Caco-2 (cell line): ENCODE measurements at regions of chr3 and their contacts with region 1.

Region 1: GRCh38 chr3:155995525-155996351 is 124.6 kb upstream of the KCNAB1 start:
- DNase-seq: peak in 1 of 2 experiments; percentile 20
- H3K4me3 ChIP-seq: no peak overlapping the region
- H3K4me3 Mint-ChIP-seq: no peak overlapping the region
- H3K27ac Mint-ChIP-seq: no peak overlapping the region
- H3K4me1 ChIP-seq: 0 out of 2 replicates have a peak, but pooled peaks cover 4% of the 10 kb centered on the region
- H3K4me1 Mint-ChIP-seq: peaks cover 7% of the 10 kb centered on the region
- H3K27me3 ChIP-seq: no peaks in the 10 kb centered on the region
- H3K27me3 Mint-ChIP-seq: peaks cover 5% of the 10 kb centered on the region
- CTCF ChIP-seq: peak; percentile 47 to 50

Region 2: DNA sequence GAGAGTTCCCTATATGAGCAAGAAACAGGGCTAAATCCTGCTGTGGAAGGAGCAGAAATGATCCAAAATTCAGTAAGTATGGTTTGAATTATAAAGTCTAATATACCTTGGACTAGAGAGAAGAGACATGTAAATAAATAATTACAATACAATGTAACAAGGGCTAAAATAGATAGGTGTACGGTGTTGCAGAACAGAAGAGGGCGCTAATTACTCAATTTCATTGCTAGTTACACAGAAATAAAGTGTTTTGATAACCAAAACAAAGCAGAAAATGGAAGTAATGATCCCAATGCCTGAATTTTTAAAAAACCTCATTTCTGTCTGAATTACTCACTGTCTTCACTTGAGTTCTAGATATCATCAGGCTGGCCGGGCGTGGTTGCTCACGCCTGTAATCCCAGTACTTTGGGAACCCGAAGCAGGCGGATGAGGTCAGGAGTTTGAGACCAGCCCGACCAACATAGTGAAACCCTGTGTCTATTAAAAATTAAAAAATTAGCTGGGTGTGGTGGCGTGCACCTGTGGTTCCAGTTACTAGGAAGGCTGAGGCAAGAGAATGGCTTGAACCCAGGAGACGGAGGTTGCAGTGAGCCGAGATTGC is 242.6 kb before region 1 on chr3:
- CTCF ChIA-PET with region 1: no interaction called
- POLR2A ChIA-PET with region 1: no interaction called
- intact Hi-C with region 1: loop called (anchors 5 kb)
- DNase-seq: peak in 1 of 2 experiments; percentile 24
- H3K4me3 ChIP-seq: no peak overlapping the region
- H3K4me3 Mint-ChIP-seq: no peak overlapping the region
- H3K27ac Mint-ChIP-seq: no peak overlapping the region
- H3K4me1 ChIP-seq: peaks cover 11% of the 10 kb centered on the region
- H3K4me1 Mint-ChIP-seq: peaks cover 14% of the 10 kb centered on the region
- H3K27me3 ChIP-seq: no peaks in the 10 kb centered on the region
- H3K27me3 Mint-ChIP-seq: no peaks in the 10 kb centered on the region
- CTCF ChIP-seq: peak; percentile 24 to 35